Activated B cell treated with CpG ODN at 0.5 μM for 24 hours (primary cell): ENCODE measurements at regions of chr11 and their contacts with region 1.

Region 1: DNA sequence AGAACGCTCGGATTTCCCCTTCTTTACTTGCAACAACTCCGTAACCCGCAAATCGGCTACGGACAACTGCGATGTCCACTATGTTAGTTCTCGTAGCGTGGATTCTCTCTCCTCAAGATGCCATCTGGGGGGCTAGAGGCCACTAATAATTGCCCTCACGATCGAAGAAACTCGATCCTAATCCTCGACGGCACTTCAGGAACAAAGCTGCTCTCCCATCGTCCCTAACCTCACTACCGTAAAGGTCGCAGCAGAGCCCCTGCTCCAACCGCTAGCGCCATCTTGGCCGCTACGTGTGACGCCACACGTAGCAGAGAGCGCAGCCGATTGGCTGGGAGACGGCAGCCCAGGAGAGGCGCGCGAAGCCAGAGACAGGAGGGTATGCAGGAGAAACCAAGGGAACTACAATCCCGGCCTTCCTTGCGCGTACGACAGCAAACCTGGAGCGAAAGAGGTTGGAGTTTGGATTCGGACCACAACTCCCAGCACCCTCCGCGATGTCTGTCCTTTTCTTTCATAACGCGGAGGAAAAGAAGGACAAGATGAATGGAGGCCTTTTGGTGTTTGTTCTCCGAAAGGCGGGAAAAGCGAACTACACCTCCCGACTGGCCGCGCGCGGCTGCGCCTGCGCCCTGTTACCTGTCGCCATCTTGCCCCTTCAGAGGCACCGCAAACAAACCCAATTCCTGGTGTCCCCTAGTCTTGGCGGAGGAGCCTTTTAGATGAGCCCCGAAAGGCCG is at the start of gene EMSY:
- DNase-seq: peak; percentile 78
- ATAC-seq: peak; percentile 95
- H3K4me3 Mint-ChIP-seq: peak within 1 kb of the TSS; percentile 95
- H3K27ac Mint-ChIP-seq: peak within 1 kb of the TSS; percentile 93
- H3K4me1 Mint-ChIP-seq: peaks cover 31% of the 10 kb centered on the region
- H3K27me3 Mint-ChIP-seq: no peaks in the 10 kb centered on the region
- CTCF ChIP-seq: no peak
- total RNA-seq, gene EMSY: 24.9 and 31.1 TPM in 2 replicates

Region 2: GRCh38 chr11:74748211-74749127 is 1696.1 kb before region 1 on chr11 and contains the start of gene RNF169:
- CTCF ChIA-PET with region 1: no interaction called
- POLR2A ChIA-PET with region 1: no interaction called
- intact Hi-C with region 1: no loop called
- DNase-seq: peak; percentile 82
- ATAC-seq: peak; percentile 98
- H3K4me3 Mint-ChIP-seq: peak within 1 kb of the TSS; percentile 90
- H3K27ac Mint-ChIP-seq: peak within 1 kb of the TSS; percentile 95
- H3K4me1 Mint-ChIP-seq: peaks cover 32% of the 10 kb centered on the region
- H3K27me3 Mint-ChIP-seq: no peaks in the 10 kb centered on the region
- CTCF ChIP-seq: no peak
- total RNA-seq, gene RNF169: 20.4 and 22.2 TPM in 2 replicates

Region 3: GRCh38 chr11:75768112-75768908 is 676.2 kb before region 1 on chr11 and contains the start of gene DGAT2:
- CTCF ChIA-PET with region 1: no interaction called
- POLR2A ChIA-PET with region 1: no interaction called
- intact Hi-C with region 1: loop called (anchors 1 kb)
- DNase-seq: peak; percentile 84
- ATAC-seq: peak; percentile 76
- H3K4me3 Mint-ChIP-seq: peak within 1 kb of the TSS; percentile 83
- H3K27ac Mint-ChIP-seq: peak within 1 kb of the TSS; percentile 87
- H3K4me1 Mint-ChIP-seq: peaks cover 56% of the 10 kb centered on the region
- H3K27me3 Mint-ChIP-seq: no peaks in the 10 kb centered on the region
- CTCF ChIP-seq: no peak
- total RNA-seq, gene DGAT2: 6.9 and 7.9 TPM in 2 replicates

Region 4: GRCh38 chr11:76235233-76236091 is 209.1 kb before region 1 on chr11:
- CTCF ChIA-PET with region 1: no interaction called
- POLR2A ChIA-PET with region 1: no interaction called
- intact Hi-C with region 1: loop called (anchors 1 kb)
- DNase-seq: peak; percentile 82
- ATAC-seq: peak; percentile 78
- H3K4me3 Mint-ChIP-seq: peak overlapping the region; percentile 95
- H3K27ac Mint-ChIP-seq: peak overlapping the region; percentile 95
- H3K4me1 Mint-ChIP-seq: peaks cover 32% of the 10 kb centered on the region
- H3K27me3 Mint-ChIP-seq: peaks cover 7% of the 10 kb centered on the region
- CTCF ChIP-seq: no peak

Region 5: DNA sequence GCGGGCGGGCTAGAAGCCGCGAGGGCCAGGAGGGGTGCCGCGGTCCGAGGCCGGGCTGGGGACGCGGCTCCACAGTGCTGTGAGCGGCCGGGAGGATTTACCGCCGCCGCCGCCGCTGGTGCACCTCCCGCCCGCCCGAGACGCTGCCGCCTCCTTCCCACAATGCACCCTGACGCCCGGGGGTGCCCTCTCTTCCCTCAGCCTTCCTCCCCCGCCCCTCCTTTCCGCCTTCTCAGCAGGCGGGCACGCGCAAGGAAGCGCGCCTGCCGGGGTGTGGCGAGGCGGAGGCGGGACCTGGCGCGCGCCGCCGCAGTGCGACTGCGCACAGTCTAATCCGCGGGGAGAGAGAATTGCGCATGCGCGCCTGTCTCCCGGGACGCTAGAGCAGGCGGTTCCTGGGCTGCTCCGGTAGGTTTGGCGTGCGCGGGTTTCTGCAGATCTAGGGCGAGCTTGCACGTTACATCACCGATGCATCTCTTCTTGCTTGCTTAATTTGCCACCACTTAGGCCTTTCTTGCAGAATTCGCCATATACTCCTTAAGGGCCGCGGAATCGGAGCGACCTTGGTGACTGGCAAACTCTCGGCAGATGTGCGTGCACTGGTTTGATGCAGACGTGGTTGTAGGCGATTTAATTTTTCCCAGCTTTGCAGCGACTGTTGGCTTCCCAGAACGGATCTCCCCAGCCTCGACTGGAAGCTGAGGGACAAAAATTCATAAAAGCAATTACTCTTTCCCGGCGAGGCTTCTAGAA is 63.4 kb before region 1 on chr11 and contains the starts of genes GVQW3 and THAP12:
- CTCF ChIA-PET with region 1: no interaction called
- POLR2A ChIA-PET with region 1: interaction called, 4 read pairs
- intact Hi-C with region 1: loop called (anchors 1 kb)
- DNase-seq: peak; percentile 97
- ATAC-seq: peak; percentile 87
- H3K4me3 Mint-ChIP-seq: peak within 1 kb of the TSS; percentile 94
- H3K27ac Mint-ChIP-seq: peak within 1 kb of the TSS; percentile 88
- H3K4me1 Mint-ChIP-seq: peaks cover 63% of the 10 kb centered on the region
- H3K27me3 Mint-ChIP-seq: no peaks in the 10 kb centered on the region
- CTCF ChIP-seq: no peak
- total RNA-seq, gene GVQW3: 2.6 and 3.0 TPM in 2 replicates
- total RNA-seq, gene THAP12: 56.5 and 60.2 TPM in 2 replicates

Region 6: GRCh38 chr11:76523147-76523546 is 78.6 kb after region 1 on chr11:
- CTCF ChIA-PET with region 1: no interaction called
- POLR2A ChIA-PET with region 1: no interaction called
- intact Hi-C with region 1: no loop called
- DNase-seq: no peak
- ATAC-seq: no peak
- H3K4me3 Mint-ChIP-seq: no peak overlapping the region
- H3K27ac Mint-ChIP-seq: no peak overlapping the region
- H3K4me1 Mint-ChIP-seq: no peaks in the 10 kb centered on the region
- H3K27me3 Mint-ChIP-seq: no peaks in the 10 kb centered on the region
- CTCF ChIP-seq: no peak

Region 7: GRCh38 chr11:76686261-76687079 is 241.9 kb after region 1 on chr11:
- CTCF ChIA-PET with region 1: no interaction called
- POLR2A ChIA-PET with region 1: interaction called, 11 read pairs
- intact Hi-C with region 1: no loop called
- DNase-seq: no peak
- ATAC-seq: peak; percentile 80
- H3K4me3 Mint-ChIP-seq: peak overlapping the region; percentile 80
- H3K27ac Mint-ChIP-seq: peak overlapping the region; percentile 77
- H3K4me1 Mint-ChIP-seq: peaks cover 36% of the 10 kb centered on the region
- H3K27me3 Mint-ChIP-seq: peaks cover 26% of the 10 kb centered on the region
- CTCF ChIP-seq: no peak

Region 8: DNA sequence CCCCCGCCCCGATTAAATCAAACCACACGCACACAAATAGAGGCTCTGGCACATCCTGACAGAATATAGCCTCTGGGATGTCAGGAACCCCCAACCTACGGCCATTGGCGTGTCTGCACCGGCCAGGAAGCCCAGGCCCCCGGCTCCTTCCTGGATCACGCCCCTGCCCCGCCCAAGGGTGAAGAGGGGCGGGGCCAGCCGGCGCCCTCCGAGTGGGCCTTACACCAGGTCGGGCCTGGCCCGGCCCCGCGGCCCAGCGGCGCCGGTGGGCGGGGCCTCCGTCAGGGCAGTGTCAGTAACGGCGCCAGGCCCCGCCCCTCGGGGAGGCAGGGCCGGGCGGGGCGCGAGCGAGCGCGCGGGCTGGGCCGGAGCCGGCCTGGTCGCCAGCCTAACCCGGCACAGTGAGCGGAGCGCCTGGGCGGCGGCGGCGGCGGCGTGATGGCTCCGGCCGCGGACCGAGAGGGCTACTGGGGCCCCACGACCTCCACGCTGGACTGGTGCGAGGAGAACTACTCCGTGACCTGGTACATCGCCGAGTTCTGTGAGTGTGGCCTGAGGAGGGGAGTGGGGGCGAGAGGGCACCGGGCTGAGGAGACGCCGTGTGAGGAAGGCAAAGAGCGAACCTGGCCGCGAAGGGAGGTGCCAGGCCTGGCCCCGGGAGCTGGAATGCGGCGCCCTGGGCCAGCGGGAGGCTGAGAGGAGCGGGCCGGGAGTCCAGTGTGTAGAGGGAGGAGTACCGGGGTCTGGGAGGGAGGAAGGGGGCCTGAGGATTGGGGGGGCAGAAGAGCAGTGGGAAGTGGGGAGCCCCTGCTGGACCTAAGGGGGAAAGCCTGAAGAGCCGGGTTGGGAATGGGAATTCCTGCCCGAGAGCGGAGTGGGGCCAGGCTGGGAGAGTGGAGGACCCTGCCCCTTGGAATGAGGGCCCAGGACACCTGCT is 416.3 kb after region 1 on chr11 and contains the start of gene ACER3:
- CTCF ChIA-PET with region 1: no interaction called
- POLR2A ChIA-PET with region 1: no interaction called
- intact Hi-C with region 1: loop called (anchors 10 kb)
- DNase-seq: peak; percentile 89
- ATAC-seq: peak; percentile 99
- H3K4me3 Mint-ChIP-seq: peak within 1 kb of the TSS; percentile 89
- H3K27ac Mint-ChIP-seq: peak within 1 kb of the TSS; percentile 84
- H3K4me1 Mint-ChIP-seq: peaks cover 45% of the 10 kb centered on the region
- H3K27me3 Mint-ChIP-seq: no peaks in the 10 kb centered on the region
- CTCF ChIP-seq: no peak
- total RNA-seq, gene ACER3: 11.8 and 12.4 TPM in 2 replicates

Region 9: GRCh38 chr11:77637345-77638165 is 1193.0 kb after region 1 on chr11 and contains the start of gene CLNS1A:
- CTCF ChIA-PET with region 1: no interaction called
- POLR2A ChIA-PET with region 1: no interaction called
- intact Hi-C with region 1: loop called (anchors 10 kb)
- DNase-seq: peak; percentile 70
- ATAC-seq: peak; percentile 99
- H3K4me3 Mint-ChIP-seq: peak within 1 kb of the TSS; percentile 96
- H3K27ac Mint-ChIP-seq: peak within 1 kb of the TSS; percentile 94
- H3K4me1 Mint-ChIP-seq: peaks cover 41% of the 10 kb centered on the region
- H3K27me3 Mint-ChIP-seq: no peaks in the 10 kb centered on the region
- CTCF ChIP-seq: no peak
- total RNA-seq, gene CLNS1A: 112 and 116 TPM in 2 replicates